Naive thymus-derived CD4-positive, alpha-beta T cell (primary cell): ENCODE measurements at regions of chr3 and their contacts with region 1.

Region 1: GRCh38 chr3:43286115-43286840 is at the start of gene SNRK:
- DNase-seq: peak; percentile 84 to 99 (median 94)
- ATAC-seq: peak; percentile 93
- H3K4me3 ChIP-seq: peak within 1 kb of the TSS; percentile 79
- H3K4me3 Mint-ChIP-seq: peak within 1 kb of the TSS; percentile 97 to 100 (median 99)
- H3K27ac ChIP-seq: peak within 1 kb of the TSS; percentile 99
- H3K27ac Mint-ChIP-seq: peak within 1 kb of the TSS; percentile 93 to 100 (median 99)
- H3K4me1 ChIP-seq: peaks cover 28% of the 10 kb centered on the region in 2 donors
- H3K4me1 Mint-ChIP-seq: peaks cover 27 to 34% (median 33%) of the 10 kb centered on the region in 7 donors
- H3K27me3 ChIP-seq: no peaks in the 10 kb centered on the region
- H3K27me3 Mint-ChIP-seq: peaks cover 0 to 16% (median 0%) of the 10 kb centered on the region in 5 donors
- total RNA-seq, gene SNRK: 71.9 to 176 (median 146) TPM

Region 2: GRCh38 chr3:42804106-42804830 is 482.0 kb before region 1 on chr3 and contains the start of gene HIGD1A:
- CTCF ChIA-PET with region 1: no interaction called
- POLR2A ChIA-PET with region 1: no interaction called
- intact Hi-C with region 1: loop called in 1 of 2 experiments (anchors 5 kb)
- DNase-seq: peak; percentile 82 to 93 (median 90)
- ATAC-seq: peak; percentile 100
- H3K4me3 ChIP-seq: peak within 1 kb of the TSS; percentile 91
- H3K4me3 Mint-ChIP-seq: peak within 1 kb of the TSS; percentile 93 to 99 (median 98)
- H3K27ac ChIP-seq: peak within 1 kb of the TSS; percentile 88
- H3K27ac Mint-ChIP-seq: peak within 1 kb of the TSS; percentile 84 to 97 (median 94)
- H3K4me1 ChIP-seq: peaks cover 9 to 16% of the 10 kb centered on the region in 2 donors
- H3K4me1 Mint-ChIP-seq: peaks cover 33 to 60% (median 44%) of the 10 kb centered on the region in 7 donors
- H3K27me3 ChIP-seq: no peaks in the 10 kb centered on the region
- H3K27me3 Mint-ChIP-seq: peaks cover 0 to 36% (median 4%) of the 10 kb centered on the region in 5 donors
- total RNA-seq, gene HIGD1A: 15.3 to 65.9 (median 23.6) TPM

Region 3: GRCh38 chr3:43180027-43180426 is 106.3 kb before region 1 on chr3:
- CTCF ChIA-PET with region 1: no interaction called
- POLR2A ChIA-PET with region 1: interaction called, 3 read pairs
- intact Hi-C with region 1: loop called (anchors 5 kb)
- DNase-seq: peak in 7 of 9 donors; percentile 38 to 66 (median 61)
- ATAC-seq: peak; percentile 86
- H3K4me3 ChIP-seq: peak overlapping the region; percentile 37
- H3K4me3 Mint-ChIP-seq: peak overlapping the region; percentile 66 to 82 (median 79)
- H3K27ac ChIP-seq: peak overlapping the region; percentile 50
- H3K27ac Mint-ChIP-seq: peak overlapping the region; percentile 82 to 97 (median 93)
- H3K4me1 ChIP-seq: peaks cover 32 to 41% of the 10 kb centered on the region in 2 donors
- H3K4me1 Mint-ChIP-seq: peaks cover 47 to 76% (median 71%) of the 10 kb centered on the region in 7 donors
- H3K27me3 ChIP-seq: no peaks in the 10 kb centered on the region
- H3K27me3 Mint-ChIP-seq: no peaks in the 10 kb centered on the region

Region 4: GRCh38 chr3:43302116-43302880 is 16.0 kb after region 1 on chr3:
- CTCF ChIA-PET with region 1: interaction called, 11 read pairs
- POLR2A ChIA-PET with region 1: interaction called, 66 read pairs
- intact Hi-C with region 1: loop called (anchors 2 kb)
- DNase-seq: no peak
- ATAC-seq: no peak
- H3K4me3 ChIP-seq: no peak overlapping the region
- H3K4me3 Mint-ChIP-seq: peak overlapping the region; percentile 51 to 86 (median 72)
- H3K27ac ChIP-seq: peak overlapping the region; percentile 89
- H3K27ac Mint-ChIP-seq: peak overlapping the region; percentile 74 to 96 (median 91)
- H3K4me1 ChIP-seq: peaks cover 54 to 71% of the 10 kb centered on the region in 2 donors
- H3K4me1 Mint-ChIP-seq: peaks cover 41 to 94% (median 85%) of the 10 kb centered on the region in 7 donors
- H3K27me3 ChIP-seq: no peaks in the 10 kb centered on the region
- H3K27me3 Mint-ChIP-seq: no peaks in the 10 kb centered on the region

Region 5: DNA sequence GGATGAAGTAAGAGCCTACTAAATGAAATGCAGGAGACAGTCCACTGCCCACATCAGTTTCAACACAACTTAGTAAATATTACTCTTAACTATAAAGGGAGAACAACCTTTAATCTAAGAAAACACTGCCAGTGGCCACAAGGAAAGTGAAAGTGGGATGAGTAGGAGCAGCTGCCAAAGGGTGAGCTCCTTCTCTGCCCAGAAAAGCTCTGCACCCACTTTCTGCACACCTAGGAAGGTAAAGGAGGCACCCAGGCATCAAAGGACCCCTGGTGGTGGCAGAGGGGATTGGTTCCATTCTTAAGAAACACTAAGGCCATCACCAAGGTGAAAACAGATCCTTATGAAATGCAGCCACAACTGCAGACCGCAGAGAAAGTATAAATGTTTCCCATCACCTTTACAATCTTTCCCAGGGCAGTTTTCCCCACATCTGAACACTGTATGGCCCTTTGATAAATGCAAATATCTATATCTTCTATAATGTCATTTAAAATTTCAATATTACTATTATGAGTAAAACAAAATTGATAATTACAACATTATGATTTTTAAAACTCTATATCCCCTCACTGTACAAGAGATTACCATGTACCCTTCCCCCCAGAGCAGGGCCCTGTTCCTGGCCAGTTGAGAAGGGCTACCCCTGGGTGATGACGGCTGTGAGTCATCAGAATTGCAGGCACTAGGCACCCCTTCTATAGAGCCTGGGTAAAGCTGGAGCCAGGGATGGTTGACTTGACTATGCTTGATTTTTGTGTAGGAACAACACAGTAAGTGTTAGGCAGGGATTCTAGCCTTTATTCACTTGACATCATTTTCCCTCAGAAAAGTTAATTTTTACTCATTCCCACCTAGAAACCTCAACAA is 92.0 kb after region 1 on chr3:
- CTCF ChIA-PET with region 1: interaction called, 7 read pairs
- POLR2A ChIA-PET with region 1: interaction called, 5 read pairs
- intact Hi-C with region 1: loop called (anchors 1 to 2 kb)
- DNase-seq: peak; percentile 30 to 78 (median 71)
- ATAC-seq: peak; percentile 94
- H3K4me3 ChIP-seq: no peak overlapping the region
- H3K4me3 Mint-ChIP-seq: no peak overlapping the region
- H3K27ac ChIP-seq: no peak overlapping the region
- H3K27ac Mint-ChIP-seq: peak overlapping the region in 8 of 9 donors; percentile 26 to 88 (median 40)
- H3K4me1 ChIP-seq: peaks cover 6 to 10% of the 10 kb centered on the region in 2 donors
- H3K4me1 Mint-ChIP-seq: peaks cover 6 to 29% (median 19%) of the 10 kb centered on the region in 7 donors
- H3K27me3 ChIP-seq: no peaks in the 10 kb centered on the region
- H3K27me3 Mint-ChIP-seq: peaks cover 0 to 12% (median 0%) of the 10 kb centered on the region in 5 donors

Region 6: GRCh38 chr3:43621656-43622432 is 335.6 kb after region 1 on chr3 and contains the start of gene ANO10:
- CTCF ChIA-PET with region 1: no interaction called
- POLR2A ChIA-PET with region 1: no interaction called
- intact Hi-C with region 1: loop called in 1 of 2 experiments (anchors 5 kb)
- DNase-seq: peak; percentile 82 to 99 (median 91)
- ATAC-seq: peak; percentile 97
- H3K4me3 ChIP-seq: peak within 1 kb of the TSS; percentile 84
- H3K4me3 Mint-ChIP-seq: peak within 1 kb of the TSS; percentile 82 to 94 (median 91)
- H3K27ac ChIP-seq: peak within 1 kb of the TSS; percentile 60
- H3K27ac Mint-ChIP-seq: peak within 1 kb of the TSS; percentile 68 to 92 (median 86)
- H3K4me1 ChIP-seq: peaks cover 11 to 15% of the 10 kb centered on the region in 2 donors
- H3K4me1 Mint-ChIP-seq: peaks cover 8 to 26% (median 23%) of the 10 kb centered on the region in 7 donors
- H3K27me3 ChIP-seq: no peaks in the 10 kb centered on the region
- H3K27me3 Mint-ChIP-seq: peaks cover 0 to 15% (median 0%) of the 10 kb centered on the region in 5 donors
- total RNA-seq, gene ANO10: 6.1 to 13.6 (median 9.3) TPM